Activated B cell treated with CpG ODN at 0.5 μM for 24 hours (primary cell): ENCODE measurements at regions of chr7 and their contacts with region 1.

Region 1: DNA sequence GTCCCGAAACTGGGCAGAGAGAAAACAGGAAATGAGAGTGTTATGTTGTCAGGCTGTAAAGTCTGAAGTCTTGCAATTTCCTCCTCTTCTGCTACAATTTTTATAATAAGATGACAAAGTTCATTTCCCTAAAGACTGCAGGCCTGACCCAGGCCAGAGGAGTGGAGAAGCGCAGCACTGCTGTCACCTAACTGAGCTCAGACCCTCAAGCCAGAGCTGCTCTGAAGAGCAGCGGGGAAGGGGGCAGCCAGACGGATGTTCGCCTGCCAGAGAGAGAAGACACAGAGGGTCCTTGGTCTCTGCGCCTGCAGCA is 12.6 kb upstream of the AOAH start:
- DNase-seq: no peak
- ATAC-seq: no peak
- H3K4me3 Mint-ChIP-seq: peak overlapping the region; percentile 45
- H3K27ac Mint-ChIP-seq: peak overlapping the region; percentile 84
- H3K4me1 Mint-ChIP-seq: peaks cover 23% of the 10 kb centered on the region
- H3K27me3 Mint-ChIP-seq: no peaks in the 10 kb centered on the region
- CTCF ChIP-seq: no peak

Region 2: GRCh38 chr7:36366718-36367560 is 369.9 kb before region 1 on chr7:
- CTCF ChIA-PET with region 1: no interaction called
- POLR2A ChIA-PET with region 1: no interaction called
- intact Hi-C with region 1: loop called (anchors 2 kb)
- DNase-seq: peak; percentile 93
- ATAC-seq: peak; percentile 98
- H3K4me3 Mint-ChIP-seq: peak overlapping the region; percentile 92
- H3K27ac Mint-ChIP-seq: peak overlapping the region; percentile 30
- H3K4me1 Mint-ChIP-seq: peaks cover 5% of the 10 kb centered on the region
- H3K27me3 Mint-ChIP-seq: peaks cover 6% of the 10 kb centered on the region
- CTCF ChIP-seq: no peak

Region 3: DNA sequence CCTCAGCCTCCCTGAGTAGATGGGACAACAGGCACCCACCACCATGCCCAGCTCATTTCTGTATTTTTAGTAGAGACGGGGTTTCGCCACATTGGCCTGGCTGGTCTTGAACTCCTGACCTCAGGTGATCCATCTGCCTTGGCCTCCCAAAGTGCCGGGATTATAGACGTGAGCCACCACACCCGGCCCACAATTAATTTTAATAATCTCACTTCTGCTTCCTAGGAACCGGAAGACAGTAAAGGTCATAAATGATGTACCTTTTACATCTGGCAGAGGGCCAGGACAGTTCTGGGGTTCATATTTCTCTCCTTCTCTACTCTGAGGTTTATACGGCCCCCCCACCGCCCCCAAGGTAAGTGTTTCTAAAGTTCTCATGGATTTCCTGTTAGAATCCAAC is 18.6 kb after region 1 on chr7:
- CTCF ChIA-PET with region 1: no interaction called
- POLR2A ChIA-PET with region 1: no interaction called
- intact Hi-C with region 1: loop called (anchors 1 kb)
- DNase-seq: no peak
- ATAC-seq: peak; percentile 61
- H3K4me3 Mint-ChIP-seq: peak overlapping the region; percentile 3
- H3K27ac Mint-ChIP-seq: no peak overlapping the region
- H3K4me1 Mint-ChIP-seq: peaks cover 24% of the 10 kb centered on the region
- H3K27me3 Mint-ChIP-seq: no peaks in the 10 kb centered on the region
- CTCF ChIP-seq: no peak